ENCODE measurements at regions of chr17 and their contacts with region 1.

Region 1: GRCh38 chr17:59331129-59331928 is at the start of gene YPEL2:
- DNase-seq: peak; percentile 93
- ATAC-seq: peak; percentile 92
- H3K4me3 ChIP-seq: peak within 1 kb of the TSS; percentile 45 to 93 (median 90)
- H3K4me3 Mint-ChIP-seq: peak within 1 kb of the TSS; percentile 97
- H3K27ac ChIP-seq: peak within 1 kb of the TSS; percentile 42 to 76
- H3K27ac Mint-ChIP-seq: peak within 1 kb of the TSS; percentile 89
- H3K4me1 ChIP-seq: peaks cover 33 to 45% of the 10 kb centered on the region in 2 donors
- H3K4me1 Mint-ChIP-seq: peaks cover 69% of the 10 kb centered on the region
- H3K27me3 ChIP-seq: no peaks in the 10 kb centered on the region
- H3K27me3 Mint-ChIP-seq: no peaks in the 10 kb centered on the region
- CTCF ChIP-seq: no peak
- total RNA-seq, gene YPEL2: 51.8 and 53.9 TPM in 2 replicates

Region 2: DNA sequence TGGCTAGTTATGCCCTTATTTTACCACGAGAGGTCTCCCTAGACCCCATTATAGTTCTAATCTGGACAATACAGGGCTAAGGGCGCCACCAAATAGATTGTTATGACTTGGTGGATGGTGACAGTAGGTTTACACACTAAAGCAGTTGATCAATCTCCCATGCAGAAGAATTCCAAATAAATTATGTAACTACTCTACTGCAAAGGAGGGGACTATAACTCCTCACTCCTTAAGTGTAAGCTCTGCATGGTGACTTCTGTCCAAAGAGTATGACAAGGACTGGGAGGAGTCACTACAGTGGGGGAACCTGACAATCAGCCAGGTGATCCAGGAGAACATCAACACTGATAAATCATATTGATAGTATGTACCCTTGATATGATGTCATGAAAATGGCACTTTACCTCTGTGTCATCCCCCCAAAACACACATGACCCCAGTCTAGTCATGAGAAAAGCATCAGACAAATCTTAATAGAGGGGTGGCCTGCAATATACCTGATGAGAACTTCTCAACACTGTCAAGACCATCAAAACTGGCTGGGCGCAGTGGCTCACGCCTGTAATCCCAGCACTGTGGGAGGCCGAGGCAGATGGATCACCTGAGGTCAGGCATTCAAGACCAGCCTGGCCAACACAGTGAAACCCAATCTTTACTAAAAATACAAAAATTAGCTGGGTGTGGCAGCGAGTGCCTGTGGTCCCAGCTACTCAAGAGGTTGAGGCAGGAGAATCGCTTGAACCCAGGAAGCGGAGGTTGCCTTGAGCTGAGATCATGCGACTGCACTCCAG is 20.0 kb before region 1 on chr17:
- CTCF ChIA-PET with region 1: interaction called, 122 read pairs
- POLR2A ChIA-PET with region 1: no interaction called
- intact Hi-C with region 1: loop called (anchors 1 kb)
- DNase-seq: peak; percentile 81
- ATAC-seq: peak; percentile 98
- H3K4me3 ChIP-seq: no peak overlapping the region
- H3K4me3 Mint-ChIP-seq: no peak overlapping the region
- H3K27ac ChIP-seq: no peak overlapping the region
- H3K27ac Mint-ChIP-seq: no peak overlapping the region
- H3K4me1 ChIP-seq: peaks cover 0 to 2% of the 10 kb centered on the region in 2 donors
- H3K4me1 Mint-ChIP-seq: no peaks in the 10 kb centered on the region
- H3K27me3 ChIP-seq: no peaks in the 10 kb centered on the region
- H3K27me3 Mint-ChIP-seq: no peaks in the 10 kb centered on the region
- CTCF ChIP-seq: peak; percentile 92

Region 3: GRCh38 chr17:59361916-59362810 is 30.8 kb after region 1 on chr17:
- CTCF ChIA-PET with region 1: interaction called, 26 read pairs
- POLR2A ChIA-PET with region 1: interaction called, 17 read pairs
- intact Hi-C with region 1: loop called (anchors 1 kb)
- DNase-seq: peak; percentile 63
- ATAC-seq: peak; percentile 79
- H3K4me3 ChIP-seq: peak overlapping the region; percentile 18 to 59 (median 24)
- H3K4me3 Mint-ChIP-seq: peak overlapping the region; percentile 91
- H3K27ac ChIP-seq: peak overlapping the region; percentile 69 to 73
- H3K27ac Mint-ChIP-seq: peak overlapping the region; percentile 67
- H3K4me1 ChIP-seq: peaks cover 79 to 85% of the 10 kb centered on the region in 2 donors
- H3K4me1 Mint-ChIP-seq: peaks cover 79% of the 10 kb centered on the region
- H3K27me3 ChIP-seq: no peaks in the 10 kb centered on the region
- H3K27me3 Mint-ChIP-seq: no peaks in the 10 kb centered on the region
- CTCF ChIP-seq: no peak

Region 4: DNA sequence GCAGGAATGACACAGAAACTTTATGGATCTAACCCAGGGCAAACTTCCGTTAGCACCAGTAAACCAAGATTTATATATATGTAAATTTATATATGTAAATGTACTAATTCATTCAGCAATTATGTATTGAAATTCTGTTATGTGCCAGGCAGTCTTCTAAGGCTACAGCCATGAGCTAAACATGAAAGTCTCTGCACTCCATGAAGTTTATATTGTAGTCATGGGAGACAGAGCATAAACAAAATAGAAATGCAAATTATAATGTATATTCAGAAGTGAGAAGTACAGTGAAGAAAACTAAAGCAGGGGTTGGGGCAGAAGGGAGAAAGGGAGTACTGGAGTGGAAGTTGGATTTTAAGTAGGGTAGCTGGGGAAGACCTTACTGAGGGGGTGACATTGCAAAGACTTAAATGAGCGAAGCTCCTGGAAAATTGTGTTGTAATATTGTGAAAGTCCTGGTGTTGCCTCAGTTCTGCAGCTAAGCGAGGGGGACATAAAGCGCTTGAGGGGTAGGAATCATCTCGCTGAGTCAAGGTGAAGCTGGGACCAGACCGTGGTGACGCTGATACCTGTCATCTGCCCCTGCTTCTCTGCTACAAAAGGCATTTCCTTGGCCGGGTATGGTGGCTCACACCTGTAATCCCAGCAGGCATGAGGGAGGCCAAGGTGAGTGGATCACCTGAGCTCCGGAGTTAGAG is 65.0 kb after region 1 on chr17:
- CTCF ChIA-PET with region 1: interaction called, 10 read pairs
- POLR2A ChIA-PET with region 1: no interaction called
- intact Hi-C with region 1: no loop called
- DNase-seq: no peak
- ATAC-seq: no peak
- H3K4me3 ChIP-seq: no peak overlapping the region
- H3K4me3 Mint-ChIP-seq: no peak overlapping the region
- H3K27ac ChIP-seq: no peak overlapping the region
- H3K27ac Mint-ChIP-seq: peak overlapping the region; percentile 64
- H3K4me1 ChIP-seq: no peaks in the 10 kb centered on the region
- H3K4me1 Mint-ChIP-seq: peaks cover 3% of the 10 kb centered on the region
- H3K27me3 ChIP-seq: no peaks in the 10 kb centered on the region
- H3K27me3 Mint-ChIP-seq: no peaks in the 10 kb centered on the region
- CTCF ChIP-seq: no peak

Region 5: GRCh38 chr17:59427425-59427921 is 96.1 kb after region 1 on chr17:
- CTCF ChIA-PET with region 1: interaction called, 24 read pairs
- POLR2A ChIA-PET with region 1: interaction called, 3 read pairs
- intact Hi-C with region 1: no loop called
- DNase-seq: no peak
- ATAC-seq: no peak
- H3K4me3 ChIP-seq: no peak overlapping the region
- H3K4me3 Mint-ChIP-seq: no peak overlapping the region
- H3K27ac ChIP-seq: no peak overlapping the region
- H3K27ac Mint-ChIP-seq: no peak overlapping the region
- H3K4me1 ChIP-seq: no peaks in the 10 kb centered on the region
- H3K4me1 Mint-ChIP-seq: peaks cover 2% of the 10 kb centered on the region
- H3K27me3 ChIP-seq: no peaks in the 10 kb centered on the region
- H3K27me3 Mint-ChIP-seq: peaks cover 3% of the 10 kb centered on the region
- CTCF ChIP-seq: no peak

Region 6: GRCh38 chr17:59451706-59452105 is 120.4 kb after region 1 on chr17:
- CTCF ChIA-PET with region 1: interaction called, 10 read pairs
- POLR2A ChIA-PET with region 1: no interaction called
- intact Hi-C with region 1: no loop called
- DNase-seq: no peak
- ATAC-seq: no peak
- H3K4me3 ChIP-seq: no peak overlapping the region
- H3K4me3 Mint-ChIP-seq: no peak overlapping the region
- H3K27ac ChIP-seq: no peak overlapping the region
- H3K27ac Mint-ChIP-seq: no peak overlapping the region
- H3K4me1 ChIP-seq: no peaks in the 10 kb centered on the region
- H3K4me1 Mint-ChIP-seq: no peaks in the 10 kb centered on the region
- H3K27me3 ChIP-seq: no peaks in the 10 kb centered on the region
- H3K27me3 Mint-ChIP-seq: peaks cover 3% of the 10 kb centered on the region
- CTCF ChIP-seq: no peak

Measured in B cell (primary cell).